ENCODE measurements at regions of chr6 and their contacts with region 1.

Region 1: GRCh38 chr6:11722805-11723631 is 55.6 kb downstream of the ADTRP start:
- DNase-seq: no peak

Region 2: GRCh38 chr6:11496152-11497060 is 226.6 kb before region 1 on chr6:
- intact Hi-C with region 1: no loop called
- DNase-seq: no peak

Region 3: DNA sequence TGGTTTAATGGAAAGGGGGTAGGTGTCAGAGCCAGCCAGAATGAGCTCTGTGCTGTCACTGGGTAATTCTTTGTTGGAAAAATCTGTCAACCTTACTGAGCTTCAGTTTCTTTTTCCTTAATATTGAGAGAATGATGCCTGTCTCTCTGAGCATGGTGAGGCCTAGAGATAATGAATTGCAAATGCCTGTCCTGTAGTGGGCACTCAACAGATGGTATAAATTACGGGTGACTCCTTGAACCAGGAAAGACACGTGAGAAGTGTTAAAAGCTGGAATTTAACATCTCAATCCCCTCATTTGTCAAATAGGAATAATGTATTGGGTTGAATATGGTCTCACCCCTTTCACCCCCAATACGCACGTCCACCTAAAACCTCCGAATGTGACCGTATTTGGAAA is 19.3 kb before region 1 on chr6:
- intact Hi-C with region 1: loop called in 1 of 2 experiments (anchors 1 kb)
- DNase-seq: no peak

Region 4: DNA sequence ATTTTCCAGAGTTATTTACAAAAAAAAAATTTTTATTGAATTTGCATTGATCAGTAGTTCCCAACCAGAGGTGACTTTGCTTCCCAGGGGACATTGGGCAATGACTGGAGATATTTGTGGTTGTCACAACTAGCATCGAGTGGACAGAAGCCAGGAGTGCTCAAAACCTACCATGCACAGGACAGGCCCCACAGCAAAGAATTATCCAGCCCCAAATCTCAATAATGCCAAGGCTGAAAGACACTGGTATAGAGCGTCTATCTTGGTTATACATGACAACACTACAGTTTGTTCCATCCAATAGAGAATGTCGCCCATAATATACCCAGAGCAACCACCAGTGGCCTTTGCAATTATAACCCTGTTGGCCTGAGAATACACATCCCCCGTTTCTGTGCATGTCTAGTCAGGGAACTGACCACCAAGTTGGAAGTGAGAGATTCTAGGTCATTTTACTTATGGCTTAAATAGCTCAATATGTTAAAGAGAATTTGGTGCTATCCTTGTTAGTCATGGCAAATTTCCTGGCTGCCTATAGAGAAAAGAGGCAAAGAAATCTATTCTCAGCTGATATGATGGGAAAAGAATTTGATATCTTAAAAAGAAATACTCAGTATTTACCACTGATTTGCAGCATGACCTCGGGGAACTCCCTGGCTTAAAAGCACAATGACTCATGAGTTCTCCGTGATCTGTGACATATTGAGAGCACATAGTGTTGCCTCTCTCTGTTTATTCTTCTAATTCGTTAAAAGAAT is 131.6 kb after region 1 on chr6:
- intact Hi-C with region 1: no loop called
- DNase-seq: no peak